ENCODE measurements at regions of chr5 and their contacts with region 1.

Region 1: DNA sequence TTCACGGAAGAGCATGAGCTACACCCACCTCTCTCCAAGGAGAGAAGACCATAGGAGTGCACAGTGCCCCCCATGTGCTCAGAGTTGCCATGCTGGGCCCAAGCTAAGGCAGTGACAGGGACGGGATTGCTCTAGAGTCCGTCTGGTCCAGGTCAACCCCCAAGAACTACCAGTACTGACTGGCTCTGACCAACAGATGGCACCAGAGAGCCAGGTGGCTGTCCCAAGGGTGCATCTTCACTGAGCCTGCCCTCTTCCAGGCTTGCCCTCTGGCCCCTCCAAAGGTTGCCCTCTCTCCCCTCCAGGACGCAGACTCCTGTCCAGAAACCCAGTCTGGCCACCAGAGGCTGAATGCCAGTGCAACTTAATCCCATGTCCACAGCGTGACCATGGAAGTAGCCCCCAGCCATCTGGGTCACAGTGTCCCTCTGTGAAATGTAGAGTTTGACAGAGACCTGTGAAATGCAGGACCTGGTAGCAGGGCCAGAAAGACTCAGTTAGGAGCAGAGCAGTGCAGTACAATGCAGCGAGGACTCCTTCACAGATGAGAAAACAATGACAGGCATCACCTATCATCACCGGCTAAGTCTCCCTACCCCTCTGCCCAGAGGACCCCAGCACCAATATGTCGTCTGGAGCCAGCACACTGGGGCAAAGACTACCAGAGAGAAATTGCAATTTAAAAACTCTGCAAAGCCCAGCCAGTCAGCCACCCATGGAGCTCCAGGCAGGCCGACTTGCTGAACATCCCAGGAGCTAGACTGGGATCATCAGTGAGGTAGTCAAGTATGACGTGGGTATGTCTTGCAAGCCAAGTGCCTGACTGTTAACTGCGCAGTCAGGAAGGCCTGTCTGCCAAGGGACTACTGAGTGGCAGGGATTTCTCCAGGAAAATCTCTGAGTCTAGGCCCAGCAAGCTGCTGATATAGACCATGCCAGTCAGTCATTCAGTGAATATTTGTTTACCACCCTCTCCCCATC is 7.7 kb upstream of the SKP1 start:
- DNase-seq: peak; percentile 27 to 88 (median 64)
- ATAC-seq: peak; percentile 78 to 94 (median 93)
- H3K4me3 ChIP-seq: no peak overlapping the region
- H3K4me3 Mint-ChIP-seq: no peak overlapping the region
- H3K27ac ChIP-seq: no peak overlapping the region
- H3K27ac Mint-ChIP-seq: peak overlapping the region in 1 of 2 donors; percentile 22
- H3K4me1 ChIP-seq: peaks cover 0 to 6% of the 10 kb centered on the region in 2 experiments
- H3K4me1 Mint-ChIP-seq: no peaks in the 10 kb centered on the region
- H3K27me3 ChIP-seq: no peaks in the 10 kb centered on the region
- H3K27me3 Mint-ChIP-seq: no peaks in the 10 kb centered on the region

Region 2: DNA sequence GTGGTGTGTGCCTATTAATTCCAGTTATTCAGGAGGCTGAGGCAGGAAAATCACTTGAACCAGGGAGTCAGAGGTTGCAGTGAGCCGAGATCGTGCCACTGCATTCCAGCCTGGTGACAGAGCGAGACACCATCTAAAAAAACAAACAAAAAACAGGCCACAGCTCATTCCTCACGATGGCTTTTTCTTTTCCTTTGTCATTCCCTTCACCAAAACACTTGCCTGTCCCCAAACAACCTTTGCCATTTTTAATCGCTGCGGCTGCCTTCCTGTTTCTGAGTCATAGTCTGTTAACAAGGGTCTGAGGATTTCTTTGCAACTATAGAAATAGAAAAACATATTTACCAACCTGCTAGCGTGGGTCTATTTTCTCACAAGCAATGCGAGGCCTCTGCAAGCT is 449.1 kb before region 1 on chr5:
- CTCF ChIA-PET with region 1: no interaction called
- POLR2A ChIA-PET with region 1: no interaction called
- DNase-seq: no peak
- ATAC-seq: no peak
- H3K4me3 ChIP-seq: no peak overlapping the region
- H3K4me3 Mint-ChIP-seq: no peak overlapping the region
- H3K27ac ChIP-seq: no peak overlapping the region
- H3K27ac Mint-ChIP-seq: no peak overlapping the region
- H3K4me1 ChIP-seq: no peaks in the 10 kb centered on the region
- H3K4me1 Mint-ChIP-seq: no peaks in the 10 kb centered on the region
- H3K27me3 ChIP-seq: peaks cover 0 to 15% of the 10 kb centered on the region in 2 experiments
- H3K27me3 Mint-ChIP-seq: peaks cover 1 to 4% of the 10 kb centered on the region in 2 donors

Region 3: GRCh38 chr5:133763744-133764143 is 420.7 kb before region 1 on chr5:
- CTCF ChIA-PET with region 1: no interaction called
- POLR2A ChIA-PET with region 1: interaction called in 1 of 2 experiments, 11 read pairs
- DNase-seq: no peak
- ATAC-seq: no peak
- H3K4me3 ChIP-seq: no peak overlapping the region
- H3K4me3 Mint-ChIP-seq: no peak overlapping the region
- H3K27ac ChIP-seq: no peak overlapping the region
- H3K27ac Mint-ChIP-seq: no peak overlapping the region
- H3K4me1 ChIP-seq: no peaks in the 10 kb centered on the region
- H3K4me1 Mint-ChIP-seq: no peaks in the 10 kb centered on the region
- H3K27me3 ChIP-seq: peaks cover 0 to 11% of the 10 kb centered on the region in 2 experiments
- H3K27me3 Mint-ChIP-seq: peaks cover 21 to 48% of the 10 kb centered on the region in 2 donors

Region 4: GRCh38 chr5:134004592-134005375 is 179.7 kb before region 1 on chr5 and contains the start of gene VDAC1:
- CTCF ChIA-PET with region 1: no interaction called
- POLR2A ChIA-PET with region 1: interaction called in 1 of 2 experiments, 12 read pairs
- DNase-seq: peak; percentile 69 to 95 (median 86)
- ATAC-seq: peak; percentile 82 to 89 (median 86)
- H3K4me3 ChIP-seq: peak within 1 kb of the TSS; percentile 79 to 84
- H3K4me3 Mint-ChIP-seq: peak within 1 kb of the TSS; percentile 79 to 91 (median 86)
- H3K27ac ChIP-seq: peak within 1 kb of the TSS; percentile 95
- H3K27ac Mint-ChIP-seq: peak within 1 kb of the TSS; percentile 90 to 91
- H3K4me1 ChIP-seq: peaks cover 9 to 51% of the 10 kb centered on the region in 2 experiments
- H3K4me1 Mint-ChIP-seq: peaks cover 42 to 47% (median 45%) of the 10 kb centered on the region in 3 donors
- H3K27me3 ChIP-seq: peaks cover 0 to 2% of the 10 kb centered on the region in 2 experiments
- H3K27me3 Mint-ChIP-seq: no peaks in the 10 kb centered on the region
- total RNA-seq, gene VDAC1: 45.8 to 58.7 (median 54.6) TPM

Region 5: GRCh38 chr5:134209477-134210240 is 25.2 kb after region 1 on chr5:
- CTCF ChIA-PET with region 1: interaction called in 1 of 2 experiments, 13 read pairs
- POLR2A ChIA-PET with region 1: interaction called in 1 of 2 experiments, 3 read pairs
- DNase-seq: no peak
- ATAC-seq: no peak
- H3K4me3 ChIP-seq: no peak overlapping the region
- H3K4me3 Mint-ChIP-seq: peak overlapping the region in 1 of 3 donors; percentile 42
- H3K27ac ChIP-seq: no peak overlapping the region
- H3K27ac Mint-ChIP-seq: peak overlapping the region in 1 of 2 donors; percentile 22
- H3K4me1 ChIP-seq: peaks cover 5 to 36% of the 10 kb centered on the region in 2 experiments
- H3K4me1 Mint-ChIP-seq: peaks cover 64 to 71% (median 68%) of the 10 kb centered on the region in 3 donors
- H3K27me3 ChIP-seq: no peaks in the 10 kb centered on the region
- H3K27me3 Mint-ChIP-seq: no peaks in the 10 kb centered on the region

Region 6: GRCh38 chr5:134215757-134216156 is 31.3 kb after region 1 on chr5:
- CTCF ChIA-PET with region 1: interaction called, 12 to 13 read pairs
- POLR2A ChIA-PET with region 1: no interaction called
- DNase-seq: no peak
- ATAC-seq: no peak
- H3K4me3 ChIP-seq: no peak overlapping the region
- H3K4me3 Mint-ChIP-seq: peak overlapping the region in 1 of 3 donors; percentile 24
- H3K27ac ChIP-seq: no peak overlapping the region
- H3K27ac Mint-ChIP-seq: no peak overlapping the region
- H3K4me1 ChIP-seq: peaks cover 13 to 53% of the 10 kb centered on the region in 2 experiments
- H3K4me1 Mint-ChIP-seq: peaks cover 80 to 81% (median 81%) of the 10 kb centered on the region in 3 donors
- H3K27me3 ChIP-seq: no peaks in the 10 kb centered on the region
- H3K27me3 Mint-ChIP-seq: no peaks in the 10 kb centered on the region

Region 7: DNA sequence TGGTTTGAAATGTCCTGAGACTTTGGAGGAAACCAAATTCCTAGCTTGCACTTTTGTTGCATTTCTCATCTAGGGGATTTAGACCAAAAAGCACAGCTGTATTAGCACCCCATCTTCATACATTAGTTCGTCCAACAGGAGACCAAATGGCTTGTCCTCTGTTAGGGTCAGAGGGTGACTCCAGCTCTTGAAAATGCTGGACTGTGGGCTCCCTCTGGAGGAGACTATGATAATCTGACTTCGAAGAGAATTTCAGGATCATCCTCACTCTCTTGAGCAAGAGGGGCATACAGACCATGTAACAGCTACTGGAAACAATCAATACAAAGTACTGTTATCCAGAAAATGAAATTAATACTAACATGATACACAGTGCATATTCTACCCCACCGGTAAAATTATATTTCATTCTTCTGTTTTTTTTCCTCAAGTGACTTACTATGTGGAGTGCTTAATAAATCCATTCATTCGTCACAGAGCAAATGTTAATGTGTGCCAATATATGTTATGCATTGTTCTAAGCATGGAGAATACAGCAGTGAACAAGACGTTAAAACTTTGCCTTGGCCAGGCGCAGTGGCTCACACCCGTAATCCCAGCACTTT is 105.2 kb after region 1 on chr5:
- CTCF ChIA-PET with region 1: interaction called, 6 to 19 read pairs
- POLR2A ChIA-PET with region 1: no interaction called
- DNase-seq: peak in 25 of 35 experiments; percentile 3 to 79 (median 18)
- ATAC-seq: peak; percentile 66 to 72 (median 68)
- H3K4me3 ChIP-seq: no peak overlapping the region
- H3K4me3 Mint-ChIP-seq: no peak overlapping the region
- H3K27ac ChIP-seq: no peak overlapping the region
- H3K27ac Mint-ChIP-seq: no peak overlapping the region
- H3K4me1 ChIP-seq: no peaks in the 10 kb centered on the region
- H3K4me1 Mint-ChIP-seq: no peaks in the 10 kb centered on the region
- H3K27me3 ChIP-seq: peaks cover 0 to 4% of the 10 kb centered on the region in 2 experiments
- H3K27me3 Mint-ChIP-seq: peaks cover 0 to 8% of the 10 kb centered on the region in 2 donors